ENCODE measurements at regions of chr7 and their contacts with region 1.

Region 1: DNA sequence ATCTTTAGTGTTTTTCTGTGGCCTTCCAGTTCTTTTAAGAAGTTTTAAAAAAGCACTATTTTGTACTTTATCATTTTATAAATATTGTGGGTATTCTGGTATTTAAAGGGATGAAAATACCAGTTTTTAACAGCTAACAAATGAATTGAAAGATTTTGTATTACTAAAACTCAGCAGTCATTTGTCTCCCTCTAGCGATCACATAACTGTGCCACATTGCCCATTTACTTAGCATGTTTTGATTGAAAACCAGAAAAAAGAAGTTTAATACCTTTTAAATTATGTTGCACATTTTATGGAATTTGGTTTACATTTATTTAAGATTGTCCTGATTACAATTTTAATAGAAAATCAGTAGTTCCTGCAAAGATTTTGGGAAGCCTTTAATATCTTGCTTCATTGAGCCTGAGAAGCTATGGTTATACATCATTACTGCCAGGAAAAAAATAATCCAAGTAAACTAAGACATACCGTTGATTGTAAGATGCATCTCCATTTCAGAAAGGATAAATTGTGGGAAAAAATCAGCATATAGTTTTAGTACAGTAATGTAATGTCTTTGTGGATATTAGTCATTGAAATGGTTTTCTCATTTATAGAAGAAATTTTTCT is 34.9 kb downstream of the TAX1BP1 start:
- DNase-seq: peak; percentile 24
- ATAC-seq: no peak
- H3K4me3 ChIP-seq: no peak overlapping the region
- H3K4me3 Mint-ChIP-seq: no peak overlapping the region
- H3K27ac ChIP-seq: no peak overlapping the region
- H3K27ac Mint-ChIP-seq: no peak overlapping the region
- H3K4me1 ChIP-seq: no peaks in the 10 kb centered on the region
- H3K4me1 Mint-ChIP-seq: no peaks in the 10 kb centered on the region
- H3K27me3 ChIP-seq: no peaks in the 10 kb centered on the region
- H3K27me3 Mint-ChIP-seq: no peaks in the 10 kb centered on the region
- CTCF ChIP-seq: peak; percentile 65

Region 2: GRCh38 chr7:27295236-27295635 is 479.6 kb before region 1 on chr7:
- CTCF ChIA-PET with region 1: no interaction called
- POLR2A ChIA-PET with region 1: no interaction called
- intact Hi-C with region 1: no loop called
- DNase-seq: no peak
- ATAC-seq: no peak
- H3K4me3 ChIP-seq: no peak overlapping the region
- H3K4me3 Mint-ChIP-seq: no peak overlapping the region
- H3K27ac ChIP-seq: no peak overlapping the region
- H3K27ac Mint-ChIP-seq: no peak overlapping the region
- H3K4me1 ChIP-seq: no peaks in the 10 kb centered on the region
- H3K4me1 Mint-ChIP-seq: peaks cover 2% of the 10 kb centered on the region
- H3K27me3 ChIP-seq: no peaks in the 10 kb centered on the region
- H3K27me3 Mint-ChIP-seq: peaks cover 34% of the 10 kb centered on the region
- CTCF ChIP-seq: no peak

Region 3: GRCh38 chr7:27689591-27690164 is 85.1 kb before region 1 on chr7:
- CTCF ChIA-PET with region 1: interaction called, 7 read pairs
- POLR2A ChIA-PET with region 1: no interaction called
- intact Hi-C with region 1: loop called (anchors 2 kb)
- DNase-seq: peak; percentile 39
- ATAC-seq: peak; percentile 51
- H3K4me3 ChIP-seq: no peak overlapping the region
- H3K4me3 Mint-ChIP-seq: no peak overlapping the region
- H3K27ac ChIP-seq: no peak overlapping the region
- H3K27ac Mint-ChIP-seq: no peak overlapping the region
- H3K4me1 ChIP-seq: no peaks in the 10 kb centered on the region
- H3K4me1 Mint-ChIP-seq: no peaks in the 10 kb centered on the region
- H3K27me3 ChIP-seq: no peaks in the 10 kb centered on the region
- H3K27me3 Mint-ChIP-seq: peaks cover 8% of the 10 kb centered on the region
- CTCF ChIP-seq: peak; percentile 30

Region 4: DNA sequence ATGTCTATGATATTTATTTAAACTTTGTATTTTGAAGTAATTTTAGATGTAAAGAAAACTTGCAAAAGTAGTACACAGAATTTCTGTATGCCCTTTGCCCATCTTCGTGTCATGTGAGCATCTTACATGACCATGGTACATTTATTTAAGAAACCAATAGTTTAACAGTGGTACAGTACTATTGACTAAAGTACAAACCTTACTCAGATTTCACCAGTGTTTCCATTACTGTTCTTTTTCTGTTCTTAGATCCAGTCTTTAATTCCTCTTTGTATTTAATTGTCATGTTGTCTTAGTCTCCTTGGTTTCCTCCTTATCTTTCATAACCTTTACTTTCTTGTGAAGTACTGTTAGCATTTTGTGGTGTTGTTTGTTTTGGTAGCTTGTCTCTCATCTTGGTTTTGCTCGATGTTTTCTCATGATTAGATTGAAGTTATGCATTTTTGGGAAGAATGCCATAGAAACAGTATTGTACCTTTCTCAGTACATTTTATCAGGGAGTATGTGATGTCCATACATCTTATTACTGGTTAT is 10.8 kb before region 1 on chr7:
- CTCF ChIA-PET with region 1: interaction called, 12 read pairs
- POLR2A ChIA-PET with region 1: no interaction called
- intact Hi-C with region 1: no loop called
- DNase-seq: no peak
- ATAC-seq: no peak
- H3K4me3 ChIP-seq: no peak overlapping the region
- H3K4me3 Mint-ChIP-seq: no peak overlapping the region
- H3K27ac ChIP-seq: no peak overlapping the region
- H3K27ac Mint-ChIP-seq: no peak overlapping the region
- H3K4me1 ChIP-seq: no peaks in the 10 kb centered on the region
- H3K4me1 Mint-ChIP-seq: peaks cover 3% of the 10 kb centered on the region
- H3K27me3 ChIP-seq: no peaks in the 10 kb centered on the region
- H3K27me3 Mint-ChIP-seq: no peaks in the 10 kb centered on the region
- CTCF ChIP-seq: no peak

Region 5: DNA sequence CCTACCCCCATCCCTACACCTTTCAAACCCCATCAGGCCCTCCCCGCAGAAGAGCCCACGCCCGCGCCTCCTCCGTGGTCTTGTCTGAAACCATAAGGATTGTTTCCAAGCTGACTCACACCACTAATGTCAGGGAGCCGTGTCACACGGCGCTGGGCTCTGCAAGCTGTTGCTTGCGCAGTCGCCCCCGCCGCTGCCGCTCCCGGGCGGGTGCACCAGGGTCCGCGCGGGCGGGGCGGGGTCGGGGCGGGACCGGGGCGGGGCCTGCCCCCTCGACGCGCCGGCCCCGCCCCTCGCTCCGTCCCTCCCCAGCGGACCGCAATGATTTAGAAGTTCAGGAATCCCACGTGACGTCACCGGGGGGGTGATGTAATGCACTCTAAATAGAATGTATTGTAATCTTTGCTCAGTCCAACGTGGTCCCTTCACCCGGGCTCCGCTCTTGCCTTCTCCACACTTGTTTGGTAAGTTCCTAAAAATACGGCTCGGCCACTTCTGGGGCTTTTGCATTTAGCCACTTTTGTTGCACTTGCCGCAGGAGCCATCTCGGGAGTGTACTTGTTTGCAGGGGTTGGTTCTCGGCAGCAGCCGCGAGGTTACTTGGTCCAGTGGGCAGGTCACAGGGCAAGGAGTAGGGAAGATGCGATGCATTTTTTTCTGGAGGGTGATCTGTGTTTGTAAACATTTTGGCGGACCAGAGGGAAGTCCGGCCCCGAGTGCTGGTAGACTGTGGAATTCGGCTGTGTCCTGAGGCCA is 634.3 kb after region 1 on chr7:
- CTCF ChIA-PET with region 1: no interaction called
- POLR2A ChIA-PET with region 1: no interaction called
- intact Hi-C with region 1: no loop called
- DNase-seq: peak; percentile 85
- ATAC-seq: peak; percentile 65
- H3K4me3 ChIP-seq: peak overlapping the region; percentile 24 to 78 (median 61)
- H3K4me3 Mint-ChIP-seq: peak overlapping the region; percentile 99
- H3K27ac ChIP-seq: no peak overlapping the region
- H3K27ac Mint-ChIP-seq: peak overlapping the region; percentile 87
- H3K4me1 ChIP-seq: peaks cover 31 to 39% of the 10 kb centered on the region in 2 donors
- H3K4me1 Mint-ChIP-seq: peaks cover 35% of the 10 kb centered on the region
- H3K27me3 ChIP-seq: peaks cover 0 to 52% (median 38%) of the 10 kb centered on the region in 4 experiments
- H3K27me3 Mint-ChIP-seq: peaks cover 66% of the 10 kb centered on the region
- CTCF ChIP-seq: no peak